Gastrocnemius medialis (tissue), 4 donors: ENCODE measurements at regions of chr6 and their contacts with region 1.

Region 1: GRCh38 chr6:160337301-160337700 is 10.9 kb upstream of the SLC22A3 start:
- DNase-seq: peak in 1 of 2 donors; percentile 20
- ATAC-seq: peak; percentile 43 to 86
- H3K4me3 ChIP-seq: no peak overlapping the region
- H3K27ac ChIP-seq: peak overlapping the region in 1 of 4 donors; percentile 56
- H3K4me1 ChIP-seq: peaks cover 0 to under 1% of the 10 kb centered on the region in 2 donors
- H3K27me3 ChIP-seq: no peaks in the 10 kb centered on the region
- CTCF ChIP-seq: no peak
- POLR2A ChIP-seq: no peak

Region 2: DNA sequence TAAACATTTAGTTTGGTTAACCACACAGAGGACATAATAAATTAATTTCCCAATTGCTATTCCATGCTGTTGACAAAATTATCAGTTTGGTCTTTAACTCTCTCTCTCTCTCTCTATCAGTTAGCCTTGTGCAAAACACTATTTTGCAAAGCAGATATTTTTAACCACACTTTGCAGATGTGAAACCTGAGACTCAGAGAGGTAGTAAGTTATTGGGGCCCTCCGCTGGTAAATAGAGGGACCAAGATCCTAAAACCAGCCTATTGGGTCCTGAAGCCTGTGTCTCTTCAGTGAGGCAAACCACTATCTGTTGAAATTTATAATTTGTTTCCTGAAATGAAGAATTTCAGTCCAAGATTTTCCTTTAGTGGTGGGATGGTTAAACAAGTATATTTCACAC is 875.3 kb before region 1 on chr6:
- in situ Hi-C with region 1: no loop called
- intact Hi-C with region 1: no loop called
- DNase-seq: no peak
- ATAC-seq: no peak
- H3K4me3 ChIP-seq: no peak overlapping the region
- H3K27ac ChIP-seq: no peak overlapping the region
- H3K4me1 ChIP-seq: no peaks in the 10 kb centered on the region
- H3K27me3 ChIP-seq: no peaks in the 10 kb centered on the region
- CTCF ChIP-seq: no peak
- POLR2A ChIP-seq: no peak

Region 3: DNA sequence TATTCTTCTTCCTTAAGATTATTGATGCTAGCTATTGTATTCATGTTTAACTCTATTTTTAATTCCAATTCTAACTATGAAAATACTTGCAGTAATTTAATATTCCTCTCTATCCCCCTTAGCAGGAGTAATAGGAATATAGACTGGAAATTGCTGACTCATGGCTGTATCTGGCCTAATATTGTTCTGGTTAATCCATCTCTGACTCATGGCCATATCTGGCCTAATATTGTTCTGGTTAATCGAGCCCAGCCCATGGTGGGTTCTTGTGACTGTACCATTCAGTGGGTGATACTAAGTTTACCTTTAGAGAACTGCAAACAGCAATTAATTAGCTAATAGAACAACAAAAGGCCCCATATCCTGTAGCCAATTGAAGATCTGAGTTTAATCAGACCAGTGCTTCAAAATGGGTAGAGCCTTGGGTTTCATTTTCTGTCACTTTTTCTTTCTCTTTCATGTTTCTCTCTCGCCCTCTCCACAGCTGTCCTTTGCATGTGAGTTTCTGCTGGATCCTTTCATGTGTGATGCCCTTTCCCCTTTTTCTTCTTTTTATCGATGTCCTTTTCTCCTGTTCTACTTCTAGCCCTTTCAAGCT is 61.5 kb after region 1 on chr6:
- in situ Hi-C with region 1: no loop called
- intact Hi-C with region 1: loop called (anchors 5 kb)
- DNase-seq: no peak
- ATAC-seq: no peak
- H3K4me3 ChIP-seq: no peak overlapping the region
- H3K27ac ChIP-seq: peak overlapping the region; percentile 84 to 89 (median 86)
- H3K4me1 ChIP-seq: peaks cover 25 to 30% of the 10 kb centered on the region in 2 donors
- H3K27me3 ChIP-seq: no peaks in the 10 kb centered on the region
- CTCF ChIP-seq: no peak
- POLR2A ChIP-seq: no peak